ENCODE measurements at regions of chr15 and their contacts with region 1.

Region 1: DNA sequence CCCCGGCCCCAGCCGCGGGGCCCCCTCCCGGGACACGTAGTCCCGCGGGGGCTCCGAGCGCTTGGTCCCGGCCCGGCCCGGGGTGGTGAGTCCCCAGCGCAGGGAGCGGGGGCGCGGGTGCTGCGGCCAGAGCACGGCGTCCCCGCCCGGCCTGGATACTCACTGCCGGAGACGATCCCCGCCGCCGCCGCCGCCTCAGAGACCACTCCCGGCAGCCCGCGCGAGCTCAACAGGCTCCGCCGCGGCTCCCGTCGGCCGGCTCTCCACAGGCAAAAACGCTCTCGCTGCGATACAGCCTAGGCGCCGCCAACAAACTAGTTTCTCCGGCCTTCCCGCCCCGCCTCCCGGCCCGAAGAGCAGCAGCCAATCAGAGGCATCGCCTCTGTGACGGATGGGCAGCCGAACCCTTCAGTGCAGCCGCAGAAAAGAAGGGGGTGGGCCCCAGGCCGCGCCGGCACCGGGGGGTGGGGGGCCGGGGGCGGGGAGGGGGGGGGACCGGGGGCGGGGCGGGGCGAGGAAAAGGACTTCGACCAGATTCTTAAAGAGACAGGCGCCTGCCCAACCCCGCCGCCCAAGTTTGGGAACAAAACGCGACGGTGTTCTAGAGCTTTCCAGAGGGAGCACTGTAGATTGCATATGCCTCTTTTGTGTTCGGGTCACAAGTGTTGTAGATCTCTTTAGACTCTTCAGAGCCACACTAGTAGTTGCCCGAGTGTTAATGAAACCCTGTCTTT is at the start of gene KLHL25:
- DNase-seq: peak; percentile 92
- ATAC-seq: peak; percentile 97
- H3K4me3 ChIP-seq: peak within 1 kb of the TSS; percentile 69
- H3K27ac ChIP-seq: peak within 1 kb of the TSS; percentile 35; the same call in 1 of the 2 replicates
- H3K4me1 ChIP-seq: peaks cover 9% of the 10 kb centered on the region
- H3K27me3 ChIP-seq: no peaks in the 10 kb centered on the region
- CTCF ChIP-seq: no peak
- POLR2A ChIP-seq: peak; percentile 75
- RAD21 ChIP-seq: no peak
- total RNA-seq, gene KLHL25: 2.7 and 2.8 TPM in 2 replicates

Region 2: GRCh38 chr15:85618956-85619491 is 175.7 kb before region 1 on chr15:
- CTCF ChIA-PET with region 1: no interaction called
- POLR2A ChIA-PET with region 1: no interaction called
- dilution Hi-C with region 1: no loop called
- in situ Hi-C with region 1: no loop called
- intact Hi-C with region 1: loop called (anchors 10 kb)
- DNase-seq: peak; percentile 98
- ATAC-seq: peak; percentile 86
- H3K4me3 ChIP-seq: peak overlapping the region; percentile 61
- H3K27ac ChIP-seq: peak overlapping the region; percentile 52
- H3K4me1 ChIP-seq: peaks cover 21% of the 10 kb centered on the region
- H3K27me3 ChIP-seq: no peaks in the 10 kb centered on the region
- CTCF ChIP-seq: no peak
- POLR2A ChIP-seq: peak; percentile 51; the same call in 1 of the 2 replicates
- RAD21 ChIP-seq: no peak; the same call in 1 of the 2 replicates

Region 3: DNA sequence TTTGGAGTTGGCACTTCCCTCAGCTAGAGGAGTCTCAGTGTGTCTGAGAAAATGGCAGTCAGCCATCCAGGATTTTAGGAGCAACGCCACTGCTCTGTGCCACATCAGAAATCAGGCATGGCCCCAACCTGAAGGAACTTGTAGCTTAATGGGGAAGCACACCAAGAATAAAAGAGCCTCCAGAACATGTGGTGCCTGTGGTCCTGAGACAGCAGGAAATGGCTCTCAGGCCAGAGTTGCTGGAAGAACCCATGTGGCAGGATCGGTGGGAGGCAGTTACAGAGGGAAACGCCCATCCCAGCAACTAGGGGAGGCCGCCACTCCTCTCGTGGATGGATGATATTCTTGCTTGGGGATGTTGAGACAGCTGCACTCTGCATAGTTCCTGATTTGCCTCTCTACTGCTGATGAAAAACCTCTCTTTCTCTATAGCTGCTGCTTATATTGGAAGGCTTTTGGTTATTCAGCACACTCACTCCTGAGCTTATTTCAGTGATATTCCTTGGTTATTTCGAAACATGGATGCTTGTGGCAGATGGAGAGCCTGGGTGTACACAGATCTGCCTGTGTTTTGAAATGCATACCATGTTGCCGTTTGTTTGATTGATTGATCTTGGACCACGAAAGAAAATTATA is 52.5 kb before region 1 on chr15:
- CTCF ChIA-PET with region 1: no interaction called
- POLR2A ChIA-PET with region 1: no interaction called
- dilution Hi-C with region 1: no loop called
- in situ Hi-C with region 1: no loop called
- intact Hi-C with region 1: loop called (anchors 5 kb)
- DNase-seq: peak; percentile 66
- ATAC-seq: peak; percentile 86
- H3K4me3 ChIP-seq: no peak overlapping the region
- H3K27ac ChIP-seq: peak overlapping the region; percentile 57; the same call in 1 of the 2 replicates
- H3K4me1 ChIP-seq: peaks cover 4% of the 10 kb centered on the region; the same call in 1 of the 2 replicates
- H3K27me3 ChIP-seq: no peaks in the 10 kb centered on the region
- CTCF ChIP-seq: no peak
- POLR2A ChIP-seq: no peak
- RAD21 ChIP-seq: no peak